K562 (cell line): ENCODE measurements at regions of chr17 and their contacts with region 1.

Region 1: GRCh38 chr17:17001874-17002520 is 30.1 kb upstream of the TNFRSF13B start:
- DNase-seq: peak; percentile 75 to 88 (median 84)
- ATAC-seq: peak; percentile 97
- H3K4me3 ChIP-seq: no peak overlapping the region
- H3K27ac ChIP-seq: no peak overlapping the region
- H3K4me1 ChIP-seq: peaks cover 0 to 11% of the 10 kb centered on the region in 2 experiments; a peak in 2 of 5 replicates
- H3K27me3 ChIP-seq: peaks cover 0 to 7% of the 10 kb centered on the region in 2 experiments; a peak in 1 of 5 replicates
- CTCF ChIP-seq: peak; percentile 78 to 92 (median 89)
- EP300 ChIP-seq: no peak
- POLR2A ChIP-seq: no peak
- RAD21 ChIP-seq: peak; percentile 80 to 88

Region 2: GRCh38 chr17:17051791-17052461 is 49.9 kb after region 1 on chr17:
- CTCF ChIA-PET with region 1: no interaction called
- POLR2A ChIA-PET with region 1: no interaction called
- in situ Hi-C with region 1: no loop called
- intact Hi-C with region 1: no loop called
- DNase-seq: no peak
- ATAC-seq: no peak
- H3K4me3 ChIP-seq: no peak overlapping the region
- H3K27ac ChIP-seq: no peak overlapping the region
- H3K4me1 ChIP-seq: peaks cover 0 to 5% of the 10 kb centered on the region in 2 experiments; a peak in 2 of 5 replicates
- H3K27me3 ChIP-seq: no peaks in the 10 kb centered on the region
- CTCF ChIP-seq: no peak
- EP300 ChIP-seq: no peak
- POLR2A ChIP-seq: no peak
- RAD21 ChIP-seq: no peak

Region 3: DNA sequence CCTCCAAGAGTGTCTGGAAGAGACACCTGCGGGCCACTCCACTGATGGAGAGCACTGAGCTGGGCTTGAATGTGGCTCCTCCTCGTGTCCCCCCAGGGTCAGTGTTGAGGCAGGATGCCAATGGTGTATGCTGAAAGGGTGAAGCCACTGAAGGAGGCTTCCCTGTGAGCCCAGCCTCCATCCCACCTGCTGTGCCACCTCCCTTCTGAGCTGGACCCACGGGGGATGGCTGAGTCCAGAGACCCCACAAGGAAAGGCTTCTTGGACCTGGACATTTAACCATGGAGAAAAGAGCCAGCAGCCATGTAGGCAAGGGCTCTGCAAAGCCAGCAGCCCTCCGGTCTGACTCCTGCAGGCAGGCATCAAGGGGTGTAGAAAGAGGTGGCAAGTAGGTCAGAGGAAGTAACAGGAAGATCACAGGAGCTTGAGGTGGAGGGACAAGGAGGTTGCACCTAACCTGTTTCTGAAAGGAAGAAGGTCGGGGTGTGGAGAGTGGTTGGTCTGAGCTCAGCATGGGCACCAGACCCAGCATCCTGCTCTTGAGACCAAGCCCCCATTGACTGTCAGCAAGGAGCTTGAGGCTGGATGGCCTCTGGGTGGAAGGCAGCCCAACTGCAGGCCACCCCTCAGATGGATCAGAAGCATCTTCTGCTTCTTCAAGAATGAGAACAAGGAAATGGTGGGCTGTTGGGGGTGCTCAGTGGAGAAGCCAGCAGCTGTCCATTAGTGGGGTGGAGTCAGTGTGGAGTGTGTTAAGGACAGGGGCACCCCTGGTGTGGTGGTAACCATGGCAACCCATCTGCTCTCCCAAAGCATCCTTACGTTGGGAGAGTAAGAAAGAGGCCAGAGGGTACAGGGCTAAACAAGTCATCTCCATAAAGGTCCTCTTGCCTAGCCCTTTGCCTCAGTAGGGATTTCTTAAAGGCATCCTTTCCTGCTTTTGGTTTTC is 123.4 kb after region 1 on chr17:
- CTCF ChIA-PET with region 1: interaction called, 9 read pairs
- POLR2A ChIA-PET with region 1: no interaction called
- in situ Hi-C with region 1: loop called (anchors 10 kb)
- intact Hi-C with region 1: no loop called
- DNase-seq: no peak
- ATAC-seq: no peak
- H3K4me3 ChIP-seq: no peak overlapping the region
- H3K27ac ChIP-seq: no peak overlapping the region
- H3K4me1 ChIP-seq: no peaks in the 10 kb centered on the region; a peak in 3 of 5 replicates
- H3K27me3 ChIP-seq: no peaks in the 10 kb centered on the region
- CTCF ChIP-seq: no peak
- EP300 ChIP-seq: no peak
- POLR2A ChIP-seq: no peak
- RAD21 ChIP-seq: no peak

Region 4: GRCh38 chr17:17141860-17142552 is 140.0 kb after region 1 on chr17:
- CTCF ChIA-PET with region 1: interaction called, 3 read pairs
- POLR2A ChIA-PET with region 1: no interaction called
- in situ Hi-C with region 1: no loop called
- intact Hi-C with region 1: loop called (anchors 5 kb)
- DNase-seq: peak; percentile 58 to 85 (median 79)
- ATAC-seq: peak; percentile 92
- H3K4me3 ChIP-seq: no peak overlapping the region
- H3K27ac ChIP-seq: no peak overlapping the region
- H3K4me1 ChIP-seq: peaks cover 0 to 7% of the 10 kb centered on the region in 2 experiments; a peak in 1 of 5 replicates
- H3K27me3 ChIP-seq: no peaks in the 10 kb centered on the region
- CTCF ChIP-seq: peak; percentile 80 to 90 (median 84)
- EP300 ChIP-seq: no peak
- POLR2A ChIP-seq: no peak
- RAD21 ChIP-seq: peak; percentile 33 to 67